Heart left ventricle (tissue), 16 donors: ENCODE measurements at regions of chr2 and their contacts with region 1.

Region 1: DNA sequence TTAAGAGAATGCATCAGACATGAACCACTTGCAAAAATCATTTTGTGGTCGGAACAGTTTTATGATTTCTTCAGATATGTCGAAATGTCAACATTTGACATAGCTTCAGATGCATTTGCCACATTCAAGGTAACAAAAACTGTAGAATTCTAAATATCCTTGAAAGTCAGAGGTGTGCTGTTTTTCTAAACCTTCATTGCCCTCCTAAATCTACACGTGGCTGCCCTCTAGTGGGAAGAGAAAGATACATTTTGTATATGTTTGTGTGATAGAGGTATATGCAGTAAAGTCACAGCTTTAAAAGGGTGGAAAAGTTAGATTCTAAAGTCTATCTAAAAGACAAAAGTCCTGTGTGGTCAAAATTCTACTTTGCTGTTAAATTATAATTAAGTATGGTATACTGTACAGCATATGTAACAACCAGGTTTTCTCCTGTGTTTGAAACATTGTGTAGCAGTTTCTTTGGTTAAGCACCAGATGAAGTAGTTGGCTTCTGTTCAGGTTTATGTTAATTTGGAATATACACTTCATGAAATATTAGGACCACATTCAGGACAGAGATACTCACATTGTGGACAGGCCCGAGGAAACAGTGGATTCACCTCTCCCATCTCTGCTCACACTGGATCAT is 65.9 kb upstream of the ITM2C start:
- DNase-seq: no peak
- ATAC-seq: no peak
- H3K4me3 ChIP-seq: no peak overlapping the region
- H3K27ac ChIP-seq: no peak overlapping the region
- H3K4me1 ChIP-seq: peaks cover 0 to 53% (median 20%) of the 10 kb centered on the region in 12 donors
- H3K27me3 ChIP-seq: no peaks in the 10 kb centered on the region
- CTCF ChIP-seq: peak; percentile 32 to 70 (median 60)
- POLR2A ChIP-seq: no peak

Region 2: GRCh38 chr2:230636684-230637271 is 162.1 kb before region 1 on chr2:
- intact Hi-C with region 1: loop called in 1 of 10 experiments (anchors 10 kb)
- DNase-seq: no peak
- ATAC-seq: no peak
- H3K4me3 ChIP-seq: no peak overlapping the region
- H3K27ac ChIP-seq: no peak overlapping the region
- H3K4me1 ChIP-seq: no peaks in the 10 kb centered on the region
- H3K27me3 ChIP-seq: no peaks in the 10 kb centered on the region
- CTCF ChIP-seq: no peak
- POLR2A ChIP-seq: no peak

Region 3: DNA sequence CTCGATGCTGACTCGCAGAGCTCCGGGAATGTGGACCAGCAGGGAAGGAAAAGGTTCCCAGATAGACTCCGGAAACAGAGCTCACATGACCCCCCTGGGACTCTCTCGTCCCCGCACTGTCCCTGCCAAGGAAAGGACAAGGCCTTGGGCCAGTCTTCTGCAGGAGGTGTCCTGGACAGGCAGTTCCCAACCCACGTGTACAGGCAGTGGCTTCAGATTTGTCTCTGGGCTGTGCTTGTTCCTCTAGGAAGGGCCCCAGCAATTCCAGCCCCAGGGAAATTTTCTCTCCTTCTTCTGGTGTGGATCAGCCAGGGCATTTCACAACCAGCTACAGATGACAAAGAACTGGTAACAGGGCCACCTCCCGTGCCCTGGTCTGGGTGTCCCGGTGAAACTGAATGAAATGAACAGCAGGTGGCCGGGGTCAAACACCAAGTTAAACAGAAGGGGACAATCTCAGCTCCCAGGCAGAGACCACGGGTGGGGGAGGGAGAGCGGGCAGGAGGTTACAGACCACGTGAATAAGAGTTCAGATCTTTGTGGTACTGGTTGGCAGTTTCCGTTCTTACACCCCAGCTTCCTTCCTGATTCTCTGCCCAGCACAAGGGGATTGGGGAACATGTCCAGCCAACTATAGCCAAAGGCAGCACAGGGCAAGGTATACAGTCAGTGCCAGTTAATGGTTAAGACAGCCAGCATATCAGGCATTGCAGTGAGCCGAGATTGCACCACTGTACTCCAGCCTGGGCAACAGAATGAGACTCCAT is 138.4 kb before region 1 on chr2:
- intact Hi-C with region 1: loop called in 1 of 10 experiments (anchors 5 kb)
- DNase-seq: peak; percentile 46 to 76 (median 57)
- ATAC-seq: peak; percentile 52 to 71 (median 59)
- H3K4me3 ChIP-seq: no peak overlapping the region
- H3K27ac ChIP-seq: peak overlapping the region in 7 of 12 donors; percentile 24 to 90 (median 39)
- H3K4me1 ChIP-seq: peaks cover 0 to 88% (median 0%) of the 10 kb centered on the region in 12 donors
- H3K27me3 ChIP-seq: no peaks in the 10 kb centered on the region
- CTCF ChIP-seq: no peak
- POLR2A ChIP-seq: no peak

Region 4: DNA sequence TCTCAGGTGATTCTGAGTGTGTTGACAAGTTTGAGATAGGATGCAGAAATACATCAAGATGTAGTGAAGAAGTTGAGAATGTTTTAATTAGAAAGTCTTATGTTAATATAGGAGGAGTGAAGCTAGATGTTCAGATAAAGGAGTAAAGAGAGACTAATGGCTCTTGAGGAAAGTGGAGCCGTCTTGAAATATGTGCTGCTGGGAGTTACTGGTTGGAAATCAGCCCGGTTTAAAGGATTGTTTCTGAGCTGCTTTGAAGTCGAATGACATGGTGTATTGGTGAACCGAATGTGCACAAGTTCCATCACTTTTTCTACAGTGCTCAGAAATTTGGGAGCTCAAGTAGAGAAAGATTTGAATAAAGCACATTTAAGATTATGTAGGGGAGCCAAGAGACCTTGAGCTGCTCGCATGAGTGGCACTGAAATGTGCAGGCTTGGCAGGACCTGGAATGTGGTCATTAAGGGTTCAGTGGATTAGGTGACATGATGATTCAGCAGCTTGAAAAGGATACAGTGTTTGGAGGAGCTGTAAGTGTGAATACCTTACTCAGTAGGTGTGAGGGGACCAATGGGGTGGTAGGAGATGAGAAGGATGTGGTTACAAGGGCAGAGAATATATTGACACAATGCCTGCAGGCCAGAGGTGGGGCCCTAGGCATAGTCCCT is 17.6 kb before region 1 on chr2:
- intact Hi-C with region 1: no loop called
- DNase-seq: no peak
- ATAC-seq: peak; percentile 8 to 56 (median 44)
- H3K4me3 ChIP-seq: no peak overlapping the region
- H3K27ac ChIP-seq: peak overlapping the region in 7 of 12 donors; percentile 2 to 59 (median 42)
- H3K4me1 ChIP-seq: peaks cover 0 to 85% (median 28%) of the 10 kb centered on the region in 12 donors
- H3K27me3 ChIP-seq: no peaks in the 10 kb centered on the region
- CTCF ChIP-seq: no peak
- POLR2A ChIP-seq: no peak

Region 5: GRCh38 chr2:231124838-231125568 is 326.1 kb after region 1 on chr2 and contains the start of gene HTR2B:
- intact Hi-C with region 1: no loop called
- DNase-seq: no peak
- ATAC-seq: peak in 3 of 4 donors; percentile 46 to 78 (median 49)
- H3K4me3 ChIP-seq: peak within 1 kb of the TSS in 8 of 12 donors; percentile 3 to 57 (median 28)
- H3K27ac ChIP-seq: peak within 1 kb of the TSS in 6 of 12 donors; percentile 2 to 53 (median 29)
- H3K4me1 ChIP-seq: peaks cover 2 to 32% (median 19%) of the 10 kb centered on the region in 12 donors
- H3K27me3 ChIP-seq: no peaks in the 10 kb centered on the region
- CTCF ChIP-seq: no peak
- POLR2A ChIP-seq: no peak
- total RNA-seq, gene HTR2B: 0.31 to 2.2 (median 0.72) TPM